Mammary epithelial cell (primary cell): ENCODE measurements at regions of chr14 and their contacts with region 1.

Region 1: DNA sequence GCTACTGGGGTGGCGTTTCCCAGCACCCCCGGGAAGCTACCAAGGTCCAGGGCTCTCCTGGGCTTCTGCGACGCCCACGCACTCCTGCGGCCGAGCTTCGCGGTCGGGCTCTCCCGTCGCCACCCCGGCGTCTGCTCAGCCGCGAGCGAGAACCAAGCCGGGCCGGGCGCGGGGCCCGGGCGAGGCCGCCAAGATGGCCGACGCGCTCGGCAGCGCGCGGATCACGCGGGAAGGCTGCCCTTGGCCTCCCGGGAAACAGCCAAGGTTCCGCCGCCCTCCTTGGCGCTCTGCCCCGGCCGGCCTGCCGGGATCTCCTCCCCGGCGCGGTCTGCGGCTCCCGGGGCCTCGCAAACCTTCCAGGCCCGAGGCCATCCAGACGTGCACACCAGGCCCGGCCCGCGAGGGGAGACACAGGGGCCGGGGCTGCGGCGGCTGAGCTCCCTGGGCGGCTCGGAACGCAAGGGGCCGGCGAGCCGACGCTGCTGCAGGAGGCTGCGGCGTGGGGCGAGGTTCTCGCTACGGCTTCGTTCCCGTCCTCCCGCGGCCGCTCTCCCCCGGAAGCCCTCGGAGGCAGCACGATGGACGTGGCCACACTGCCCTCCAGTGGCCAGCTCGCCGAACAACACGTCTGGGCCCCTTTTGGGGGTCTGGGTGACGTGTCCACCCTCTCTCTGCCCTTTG is 23.5 kb upstream of the ZFP36L1 start:
- DNase-seq: peak; percentile 82
- H3K4me3 ChIP-seq: peak overlapping the region; percentile 31 to 54 (median 45)
- H3K27ac ChIP-seq: peak overlapping the region; percentile 80
- H3K4me1 ChIP-seq: peaks cover 29% of the 10 kb centered on the region
- H3K27me3 ChIP-seq: no peaks in the 10 kb centered on the region
- CTCF ChIP-seq: peak; percentile 78 to 91

Region 2: DNA sequence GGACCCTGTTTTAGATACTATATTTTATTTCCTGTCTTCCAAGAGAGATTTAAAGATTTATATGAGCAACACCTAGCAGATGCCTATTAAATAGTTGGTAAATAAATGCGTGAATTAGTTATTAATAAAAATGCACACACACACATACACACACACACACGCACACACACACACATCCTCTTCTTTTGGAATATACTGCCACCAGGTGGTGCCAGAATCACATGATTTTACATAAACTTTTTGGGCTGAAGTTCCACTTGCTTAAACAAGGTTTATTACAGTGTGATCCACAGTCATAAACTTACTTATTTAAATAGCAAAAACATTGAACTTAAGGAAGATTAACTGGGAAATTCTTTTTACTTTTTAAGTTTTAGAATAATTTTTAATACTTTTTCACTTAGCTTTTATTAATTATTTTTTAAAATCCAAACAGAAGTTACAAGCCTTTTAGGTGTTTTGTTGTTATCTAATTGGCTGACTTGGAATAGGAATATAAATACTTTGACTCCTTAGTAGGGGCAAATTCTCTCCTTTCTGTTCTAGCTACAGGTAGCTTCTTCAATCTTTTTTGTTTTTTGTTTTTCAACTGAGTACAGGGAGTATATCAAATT is 979.3 kb before region 1 on chr14:
- CTCF ChIA-PET with region 1: no interaction called
- dilution Hi-C with region 1: no loop called
- in situ Hi-C with region 1: no loop called
- intact Hi-C with region 1: loop called (anchors 5 kb)
- DNase-seq: peak; percentile 69
- H3K4me3 ChIP-seq: no peak overlapping the region
- H3K27ac ChIP-seq: no peak overlapping the region
- H3K4me1 ChIP-seq: no peaks in the 10 kb centered on the region
- H3K27me3 ChIP-seq: no peaks in the 10 kb centered on the region
- CTCF ChIP-seq: peak; percentile 67 to 76

Region 3: DNA sequence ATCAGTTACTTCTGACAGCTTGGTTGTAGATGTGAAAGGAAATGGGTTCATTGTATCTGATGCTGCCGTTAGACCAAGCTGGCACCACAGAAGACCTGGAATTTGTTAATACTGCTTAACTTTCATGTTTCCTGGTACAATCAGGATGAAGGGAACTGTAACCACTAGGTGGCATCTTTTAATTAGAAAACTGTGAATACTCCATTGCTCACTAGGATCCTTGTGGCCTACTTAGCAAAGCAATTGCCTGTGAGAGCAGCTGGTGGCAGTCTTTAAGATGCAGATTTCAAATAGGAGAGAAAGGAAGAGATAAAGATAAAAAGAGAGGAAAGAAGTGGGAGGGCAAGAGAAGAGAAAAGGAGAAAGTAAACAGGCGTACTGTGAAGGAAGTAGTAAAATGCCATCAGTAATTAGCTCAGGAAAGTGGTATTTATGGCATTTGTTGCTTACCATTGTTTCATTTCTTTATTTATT is 882.4 kb before region 1 on chr14:
- CTCF ChIA-PET with region 1: no interaction called
- dilution Hi-C with region 1: loop called (anchors 25 kb)
- in situ Hi-C with region 1: loop called (anchors 5 to 10 kb)
- intact Hi-C with region 1: loop called (anchors 1 kb)
- DNase-seq: peak; percentile 68
- H3K4me3 ChIP-seq: no peak overlapping the region
- H3K27ac ChIP-seq: no peak overlapping the region
- H3K4me1 ChIP-seq: no peaks in the 10 kb centered on the region
- H3K27me3 ChIP-seq: no peaks in the 10 kb centered on the region
- CTCF ChIP-seq: peak; percentile 61 to 74

Region 4: DNA sequence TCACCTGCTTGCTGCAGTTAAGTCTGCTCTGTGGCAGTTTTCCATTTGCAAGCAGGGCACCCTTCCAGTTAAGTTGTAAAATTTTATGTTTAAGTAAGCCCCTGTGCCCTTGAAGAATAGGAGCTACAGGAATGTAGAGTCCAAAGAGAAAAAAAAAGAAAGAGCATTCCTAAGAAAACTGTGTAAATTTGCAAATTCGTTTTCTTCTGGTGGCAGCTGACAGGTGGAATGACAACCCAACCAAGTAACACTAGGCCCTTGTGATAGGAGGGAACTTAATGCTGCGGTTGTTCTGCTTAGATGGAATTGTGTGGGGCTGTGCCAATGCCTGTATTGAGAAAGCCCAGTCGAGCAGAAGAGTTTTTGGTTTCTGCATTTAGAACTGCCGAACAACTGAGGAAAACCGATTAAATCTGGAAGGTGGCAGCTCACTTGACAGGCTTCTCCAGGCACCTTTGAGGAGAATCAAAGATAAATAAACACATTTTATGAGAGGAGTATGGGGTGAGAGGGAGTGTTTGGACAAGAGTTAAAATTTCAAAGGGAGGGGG is 716.8 kb before region 1 on chr14:
- CTCF ChIA-PET with region 1: no interaction called
- dilution Hi-C with region 1: no loop called
- in situ Hi-C with region 1: no loop called
- intact Hi-C with region 1: loop called (anchors 5 kb)
- DNase-seq: no peak
- H3K4me3 ChIP-seq: no peak overlapping the region
- H3K27ac ChIP-seq: no peak overlapping the region
- H3K4me1 ChIP-seq: peaks cover 5% of the 10 kb centered on the region
- H3K27me3 ChIP-seq: no peaks in the 10 kb centered on the region
- CTCF ChIP-seq: no peak

Region 5: DNA sequence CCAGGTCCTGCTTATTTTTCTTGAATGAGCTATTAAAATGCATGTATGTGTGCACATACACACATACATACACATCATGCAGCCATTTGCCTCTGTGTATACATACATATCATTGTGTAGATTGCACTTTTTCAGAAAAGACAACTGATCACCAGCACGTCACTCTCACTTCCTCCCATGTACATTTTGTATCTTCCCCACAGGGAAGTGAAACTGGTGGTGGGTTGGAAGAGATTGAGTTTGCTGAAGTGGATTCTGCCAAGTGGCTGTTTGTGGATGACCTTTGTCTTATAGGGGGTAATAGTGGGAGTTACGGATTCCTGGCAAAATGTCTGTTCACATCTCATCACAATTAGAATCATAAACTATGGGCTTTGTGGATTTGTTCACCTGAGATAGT is 548.2 kb before region 1 on chr14:
- CTCF ChIA-PET with region 1: no interaction called
- dilution Hi-C with region 1: loop called (anchors 25 kb)
- in situ Hi-C with region 1: no loop called
- intact Hi-C with region 1: no loop called
- DNase-seq: no peak
- H3K4me3 ChIP-seq: no peak overlapping the region
- H3K27ac ChIP-seq: no peak overlapping the region
- H3K4me1 ChIP-seq: no peaks in the 10 kb centered on the region
- H3K27me3 ChIP-seq: no peaks in the 10 kb centered on the region
- CTCF ChIP-seq: no peak

Region 6: GRCh38 chr14:69424149-69424923 is 607.9 kb after region 1 on chr14:
- CTCF ChIA-PET with region 1: no interaction called
- dilution Hi-C with region 1: no loop called
- in situ Hi-C with region 1: no loop called
- intact Hi-C with region 1: no loop called
- DNase-seq: peak; percentile 4
- H3K4me3 ChIP-seq: no peak overlapping the region
- H3K27ac ChIP-seq: no peak overlapping the region
- H3K4me1 ChIP-seq: peaks cover 6% of the 10 kb centered on the region
- H3K27me3 ChIP-seq: no peaks in the 10 kb centered on the region
- CTCF ChIP-seq: no peak